Calu3 (cell line): ENCODE measurements at regions of chr15 and their contacts with region 1.

Region 1: GRCh38 chr15:98658831-98659699 is 10.7 kb downstream of the IGF1R start:
- DNase-seq: peak; percentile 71
- H3K4me3 Mint-ChIP-seq: no peak overlapping the region
- H3K27ac Mint-ChIP-seq: no peak overlapping the region
- H3K4me1 Mint-ChIP-seq: peaks cover 43% of the 10 kb centered on the region
- H3K27me3 Mint-ChIP-seq: no peaks in the 10 kb centered on the region
- CTCF ChIP-seq: peak; percentile 68

Region 2: DNA sequence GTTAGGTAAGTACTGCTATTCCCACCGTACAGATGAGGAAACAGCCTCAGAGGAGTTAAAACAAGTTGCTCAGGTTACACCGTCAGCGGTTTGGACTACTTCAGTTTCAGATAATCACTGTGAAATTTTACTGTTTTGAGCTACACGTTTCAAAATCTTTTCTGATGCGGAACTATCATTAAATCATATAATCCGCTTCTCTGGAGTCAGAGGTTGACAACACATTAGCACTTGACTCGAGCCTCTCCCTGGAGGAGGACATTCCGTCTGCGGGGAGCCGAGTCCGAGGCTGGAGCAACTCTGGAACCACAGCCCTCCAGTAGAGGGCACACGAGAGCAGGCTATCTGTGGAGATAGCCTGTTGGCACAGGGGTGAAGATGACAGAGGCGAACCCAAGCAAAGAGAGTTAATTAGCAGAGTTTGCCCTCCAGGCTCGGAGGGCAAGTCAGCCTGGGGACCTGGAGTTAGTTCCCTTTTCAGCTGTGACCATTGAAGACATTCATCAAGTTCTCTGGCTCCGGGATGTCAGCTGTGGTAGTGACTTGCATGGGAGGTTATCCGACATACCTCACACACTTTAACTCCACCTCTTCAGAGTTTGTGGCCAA is 120.5 kb after region 1 on chr15:
- CTCF ChIA-PET with region 1: no interaction called
- intact Hi-C with region 1: loop called (anchors 2 kb)
- DNase-seq: peak; percentile 87
- H3K4me3 Mint-ChIP-seq: no peak overlapping the region
- H3K27ac Mint-ChIP-seq: no peak overlapping the region
- H3K4me1 Mint-ChIP-seq: peaks cover 35% of the 10 kb centered on the region
- H3K27me3 Mint-ChIP-seq: no peaks in the 10 kb centered on the region
- CTCF ChIP-seq: peak; percentile 94

Region 3: DNA sequence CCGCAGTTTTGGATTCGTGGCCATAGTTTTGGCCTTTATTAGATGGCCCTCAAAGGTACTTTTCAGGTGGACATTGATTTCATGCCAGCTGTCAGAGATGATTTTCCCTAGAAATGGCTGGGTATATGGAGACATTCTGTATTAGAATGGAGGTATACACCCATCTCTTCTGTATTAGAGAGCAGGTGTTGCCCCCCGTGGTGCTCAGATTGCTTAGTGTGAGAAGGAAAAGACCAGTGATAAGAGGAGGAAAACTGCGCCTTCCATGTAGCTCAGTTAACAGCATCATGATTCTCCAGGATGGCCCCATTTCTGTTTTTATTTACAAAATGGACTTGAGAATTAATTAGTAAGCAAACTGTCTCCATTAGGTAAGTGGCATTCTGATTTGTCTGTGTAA is 135.1 kb after region 1 on chr15:
- CTCF ChIA-PET with region 1: no interaction called
- intact Hi-C with region 1: no loop called
- DNase-seq: no peak
- H3K4me3 Mint-ChIP-seq: no peak overlapping the region
- H3K27ac Mint-ChIP-seq: no peak overlapping the region
- H3K4me1 Mint-ChIP-seq: peaks cover 26% of the 10 kb centered on the region
- H3K27me3 Mint-ChIP-seq: no peaks in the 10 kb centered on the region
- CTCF ChIP-seq: no peak

Region 4: DNA sequence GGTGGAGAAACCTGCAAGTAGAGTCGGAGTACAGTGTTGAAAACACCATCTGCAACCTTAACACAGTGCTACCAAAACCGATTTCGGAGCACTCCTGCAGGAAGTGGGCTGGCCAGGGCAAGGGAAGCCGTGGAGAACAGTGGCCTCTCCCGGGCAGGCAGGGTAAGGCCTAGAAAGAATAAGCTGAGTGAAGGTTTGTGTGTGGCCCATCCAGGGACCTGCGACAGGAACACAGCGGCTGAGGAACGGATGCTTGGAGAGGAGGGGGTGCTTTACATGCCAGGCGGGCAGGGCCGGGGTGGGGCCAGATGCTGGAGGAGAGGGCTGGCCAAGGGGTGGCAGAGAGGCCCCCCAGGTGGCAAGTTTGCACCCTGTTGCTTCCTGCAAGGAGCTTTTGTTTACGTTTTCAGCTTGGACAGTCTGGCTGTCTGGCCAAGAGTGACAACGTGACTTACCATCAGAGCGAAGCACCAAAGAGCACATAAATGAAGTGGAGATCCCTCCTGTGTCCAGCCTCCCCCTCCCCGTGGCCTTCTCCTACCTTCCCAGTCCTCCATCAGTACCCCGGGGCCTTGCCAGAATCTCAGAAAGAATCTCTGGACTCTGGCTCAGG is 192.0 kb after region 1 on chr15:
- CTCF ChIA-PET with region 1: interaction called, 11 read pairs
- intact Hi-C with region 1: no loop called
- DNase-seq: peak; percentile 87
- H3K4me3 Mint-ChIP-seq: peak overlapping the region; percentile 94
- H3K27ac Mint-ChIP-seq: peak overlapping the region; percentile 81
- H3K4me1 Mint-ChIP-seq: peaks cover 51% of the 10 kb centered on the region
- H3K27me3 Mint-ChIP-seq: no peaks in the 10 kb centered on the region
- CTCF ChIP-seq: peak; percentile 69